Transverse colon (tissue), 4 donors: ENCODE measurements at regions of chr19 and their contacts with region 1.

Region 1: GRCh38 chr19:56538254-56538760 is 441 bp upstream of the ZFP28 start:
- DNase-seq: peak; percentile 89
- H3K4me3 ChIP-seq: peak overlapping the region; percentile 69 to 94 (median 74)
- H3K27ac ChIP-seq: peak overlapping the region; percentile 81 to 96 (median 90)
- H3K4me1 ChIP-seq: peaks cover 0 to 16% (median 3%) of the 10 kb centered on the region in 4 donors
- H3K27me3 ChIP-seq: no peaks in the 10 kb centered on the region
- CTCF ChIP-seq: peak in 2 of 5 experiments; percentile 24 to 25
- EP300 ChIP-seq: no peak
- POLR2A ChIP-seq: no peak

Region 2: GRCh38 chr19:56507446-56508289 is 30.6 kb before region 1 on chr19 and contains the start of gene ZNF471:
- in situ Hi-C with region 1: no loop called
- intact Hi-C with region 1: loop called (anchors 2 kb)
- DNase-seq: peak; percentile 95
- H3K4me3 ChIP-seq: peak within 1 kb of the TSS; percentile 41 to 64 (median 52)
- H3K27ac ChIP-seq: peak within 1 kb of the TSS; percentile 86 to 91 (median 90)
- H3K4me1 ChIP-seq: peaks cover 0 to 15% (median 6%) of the 10 kb centered on the region in 4 donors
- H3K27me3 ChIP-seq: no peaks in the 10 kb centered on the region
- CTCF ChIP-seq: no peak
- EP300 ChIP-seq: no peak
- POLR2A ChIP-seq: peak; percentile 21
- total RNA-seq, gene ZNF471: 1.8 to 3.5 (median 2.2) TPM